AG04450 (cell line): ENCODE measurements at regions of chr1 and their contacts with region 1.

Region 1: DNA sequence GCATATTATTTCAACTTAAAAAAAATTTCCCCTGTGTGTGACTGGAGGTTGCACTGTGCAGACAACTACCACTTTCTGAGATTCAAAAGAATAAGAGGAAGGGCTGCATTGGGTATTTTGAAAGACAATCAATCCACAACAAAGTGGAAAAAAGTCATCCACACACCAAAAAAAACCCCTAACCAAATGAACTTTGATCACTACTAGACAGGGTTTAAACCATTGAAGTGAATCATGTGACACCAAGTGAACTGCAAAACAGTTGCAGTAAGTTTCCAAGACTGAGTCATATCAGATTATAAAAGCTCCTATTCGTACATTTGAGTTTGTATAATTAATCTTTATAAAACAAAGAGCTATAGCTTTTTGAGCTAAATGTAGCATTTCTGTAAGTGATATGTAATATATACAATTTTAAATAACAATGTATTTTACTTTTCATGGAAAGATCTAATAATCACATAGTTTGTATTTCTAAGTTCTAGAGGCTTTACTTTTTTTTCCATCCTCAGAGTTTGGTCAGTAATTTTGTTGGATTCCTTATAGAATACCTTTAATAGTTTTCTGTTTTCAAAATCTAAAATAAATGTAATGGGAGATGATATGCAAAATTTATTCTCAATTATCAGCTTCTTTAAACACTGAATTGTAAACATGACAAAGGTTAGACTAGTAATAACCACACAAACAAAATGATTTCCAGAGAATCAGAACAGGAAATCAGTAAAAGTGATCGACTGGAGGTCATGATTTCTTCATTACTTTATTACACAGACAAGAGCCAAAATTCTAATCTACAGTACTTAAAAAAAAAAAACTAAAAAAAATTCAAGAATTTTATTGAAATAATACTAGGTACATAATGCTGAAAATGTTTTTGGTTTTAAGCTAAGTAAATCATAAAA is 50.5 kb upstream of the GFI1 start:
- DNase-seq: no peak
- H3K4me3 ChIP-seq: no peak overlapping the region
- H3K27ac ChIP-seq: no peak overlapping the region
- H3K27me3 ChIP-seq: no peaks in the 10 kb centered on the region
- CTCF ChIP-seq: no peak

Region 2: GRCh38 chr1:92399076-92399475 is 138.2 kb before region 1 on chr1:
- CTCF ChIA-PET with region 1: no interaction called
- POLR2A ChIA-PET with region 1: no interaction called
- DNase-seq: no peak
- H3K4me3 ChIP-seq: no peak overlapping the region
- H3K27ac ChIP-seq: no peak overlapping the region
- H3K27me3 ChIP-seq: no peaks in the 10 kb centered on the region
- CTCF ChIP-seq: no peak

Region 3: GRCh38 chr1:92505015-92505692 is 32.1 kb before region 1 on chr1:
- CTCF ChIA-PET with region 1: no interaction called
- POLR2A ChIA-PET with region 1: interaction called, 11 read pairs
- DNase-seq: no peak
- H3K4me3 ChIP-seq: no peak overlapping the region
- H3K27ac ChIP-seq: no peak overlapping the region
- H3K27me3 ChIP-seq: no peaks in the 10 kb centered on the region
- CTCF ChIP-seq: no peak

Region 4: DNA sequence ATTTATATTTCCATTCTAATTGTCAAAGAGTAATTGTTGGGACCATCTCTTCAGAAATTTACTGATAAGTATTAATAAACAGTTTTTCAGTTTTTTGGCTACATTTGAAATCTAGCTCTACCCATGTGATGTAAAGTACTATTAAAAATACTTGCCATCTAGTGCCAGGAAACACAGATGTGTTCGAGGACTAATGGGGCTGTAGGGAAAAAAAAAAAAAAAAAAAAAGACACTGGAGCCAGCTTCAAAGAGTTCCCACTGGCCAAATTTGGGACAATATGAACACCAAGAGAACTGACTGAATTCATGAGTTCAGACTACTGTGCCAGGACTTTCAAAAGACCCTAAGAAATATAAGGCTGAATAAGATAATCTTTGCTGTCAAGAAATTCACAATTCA is 14.7 kb after region 1 on chr1:
- CTCF ChIA-PET with region 1: interaction called, 13 read pairs
- POLR2A ChIA-PET with region 1: no interaction called
- DNase-seq: no peak
- H3K4me3 ChIP-seq: no peak overlapping the region
- H3K27ac ChIP-seq: no peak overlapping the region
- H3K27me3 ChIP-seq: no peaks in the 10 kb centered on the region
- CTCF ChIP-seq: no peak